Activated naive CD4-positive, alpha-beta T cell treated with anti-CD3 and anti-CD28 coated beads for 36 hours (primary cell): ENCODE measurements at regions of chr10 and their contacts with region 1.

Region 1: DNA sequence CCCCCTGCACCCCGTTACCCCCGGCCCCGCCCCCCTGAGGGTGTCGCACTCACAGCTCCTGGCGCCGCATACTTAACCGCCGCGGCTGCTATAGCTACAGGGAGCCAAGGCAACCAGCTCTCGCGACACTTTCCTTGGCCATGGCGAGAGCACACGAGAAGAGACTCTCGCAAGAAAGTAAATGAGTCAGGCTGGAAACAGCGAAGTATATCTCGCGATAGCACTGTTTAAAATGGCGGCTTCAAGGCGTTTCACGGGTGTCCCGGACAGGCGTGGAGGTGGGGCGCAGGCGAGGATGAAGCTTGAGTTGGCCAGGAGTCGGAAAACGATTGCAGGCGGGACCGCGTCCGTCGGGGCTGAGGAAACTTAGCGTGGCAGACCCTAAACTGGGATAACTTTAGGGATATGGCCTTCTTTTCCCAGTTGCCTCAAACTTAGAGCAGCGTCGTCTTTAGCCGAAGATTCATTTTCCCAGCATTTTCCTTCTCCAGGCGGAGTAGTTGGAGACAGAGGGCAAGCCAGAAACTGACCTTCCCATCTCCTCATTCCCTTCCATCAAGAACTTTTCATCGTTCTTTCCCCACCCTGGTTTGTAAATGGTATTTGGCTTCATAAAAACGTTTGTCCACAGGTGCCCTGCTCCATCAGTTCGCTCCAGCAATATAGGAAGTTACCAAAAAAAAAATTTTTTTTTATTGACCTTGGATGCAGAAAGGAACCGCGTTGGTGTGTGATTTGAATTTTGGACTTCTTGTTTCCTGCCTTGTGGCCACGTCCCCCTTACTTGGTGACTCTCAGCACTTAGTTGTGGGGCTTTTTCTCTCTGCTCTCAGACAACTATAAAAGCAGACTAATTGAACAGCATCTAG is 15.2 kb downstream of the MYOZ1 start:
- DNase-seq: peak; percentile 97
- H3K4me3 Mint-ChIP-seq: peak overlapping the region; percentile 99
- H3K27ac Mint-ChIP-seq: peak overlapping the region; percentile 95
- H3K4me1 Mint-ChIP-seq: peaks cover 17% of the 10 kb centered on the region
- H3K27me3 Mint-ChIP-seq: no peaks in the 10 kb centered on the region

Region 2: DNA sequence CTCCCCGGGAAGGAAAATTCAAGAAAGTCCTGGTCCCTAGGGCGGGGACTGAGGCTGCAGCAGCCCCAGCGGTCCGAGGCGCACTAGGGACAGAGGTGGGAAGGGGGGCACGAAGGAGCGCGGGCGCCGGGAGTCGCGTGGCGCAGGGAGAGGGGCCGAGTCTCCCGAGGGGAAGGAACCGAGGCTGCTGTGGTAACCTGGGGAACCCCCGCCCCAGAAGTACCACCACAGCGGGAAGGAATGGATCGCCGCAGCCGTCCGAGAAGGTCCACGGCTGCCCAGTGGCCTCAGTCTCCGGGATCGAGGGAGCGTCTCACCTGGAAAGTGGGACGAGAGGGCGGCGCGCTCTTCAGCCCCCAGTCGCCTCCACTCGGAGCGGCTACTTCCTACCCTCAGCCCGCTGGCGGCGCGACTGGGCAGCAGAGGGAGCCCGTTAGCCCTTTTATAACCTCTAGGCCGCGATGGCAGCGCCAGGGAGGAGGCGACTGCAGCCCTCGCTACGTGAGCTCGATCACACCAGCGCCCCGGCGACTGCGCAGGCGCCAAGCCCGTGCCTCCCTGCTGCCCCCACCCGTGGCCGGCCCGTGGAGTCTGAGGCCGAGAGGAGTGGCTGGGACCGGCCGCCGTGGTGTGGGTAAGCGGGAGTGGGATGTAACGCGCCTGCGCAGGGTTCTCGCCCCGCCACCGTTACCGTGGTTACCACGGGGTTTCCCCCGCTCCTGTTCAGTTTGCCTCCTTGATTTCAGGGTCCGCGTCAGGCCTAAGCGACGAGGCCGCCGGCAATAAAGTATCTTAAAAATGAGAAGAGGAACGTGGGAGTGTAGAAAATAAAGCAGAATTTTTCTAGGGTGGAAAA is 529.4 kb before region 1 on chr10 and contains the start of gene P4HA1:
- CTCF ChIA-PET with region 1: no interaction called
- intact Hi-C with region 1: loop called (anchors 1 kb)
- DNase-seq: peak; percentile 96
- H3K4me3 Mint-ChIP-seq: peak within 1 kb of the TSS; percentile 83
- H3K27ac Mint-ChIP-seq: peak within 1 kb of the TSS; percentile 93
- H3K4me1 Mint-ChIP-seq: peaks cover 32% of the 10 kb centered on the region
- H3K27me3 Mint-ChIP-seq: no peaks in the 10 kb centered on the region
- total RNA-seq, gene P4HA1: 15.3 to 15.9 TPM

Region 3: GRCh38 chr10:73246783-73247508 is 379.2 kb before region 1 on chr10 and contains the start of gene DNAJC9:
- CTCF ChIA-PET with region 1: no interaction called
- intact Hi-C with region 1: loop called (anchors 1 kb)
- DNase-seq: peak; percentile 98
- H3K4me3 Mint-ChIP-seq: peak within 1 kb of the TSS; percentile 100
- H3K27ac Mint-ChIP-seq: peak within 1 kb of the TSS; percentile 97
- H3K4me1 Mint-ChIP-seq: peaks cover 67% of the 10 kb centered on the region
- H3K27me3 Mint-ChIP-seq: no peaks in the 10 kb centered on the region
- total RNA-seq, gene DNAJC9: 55.2 to 57.2 TPM

Region 4: DNA sequence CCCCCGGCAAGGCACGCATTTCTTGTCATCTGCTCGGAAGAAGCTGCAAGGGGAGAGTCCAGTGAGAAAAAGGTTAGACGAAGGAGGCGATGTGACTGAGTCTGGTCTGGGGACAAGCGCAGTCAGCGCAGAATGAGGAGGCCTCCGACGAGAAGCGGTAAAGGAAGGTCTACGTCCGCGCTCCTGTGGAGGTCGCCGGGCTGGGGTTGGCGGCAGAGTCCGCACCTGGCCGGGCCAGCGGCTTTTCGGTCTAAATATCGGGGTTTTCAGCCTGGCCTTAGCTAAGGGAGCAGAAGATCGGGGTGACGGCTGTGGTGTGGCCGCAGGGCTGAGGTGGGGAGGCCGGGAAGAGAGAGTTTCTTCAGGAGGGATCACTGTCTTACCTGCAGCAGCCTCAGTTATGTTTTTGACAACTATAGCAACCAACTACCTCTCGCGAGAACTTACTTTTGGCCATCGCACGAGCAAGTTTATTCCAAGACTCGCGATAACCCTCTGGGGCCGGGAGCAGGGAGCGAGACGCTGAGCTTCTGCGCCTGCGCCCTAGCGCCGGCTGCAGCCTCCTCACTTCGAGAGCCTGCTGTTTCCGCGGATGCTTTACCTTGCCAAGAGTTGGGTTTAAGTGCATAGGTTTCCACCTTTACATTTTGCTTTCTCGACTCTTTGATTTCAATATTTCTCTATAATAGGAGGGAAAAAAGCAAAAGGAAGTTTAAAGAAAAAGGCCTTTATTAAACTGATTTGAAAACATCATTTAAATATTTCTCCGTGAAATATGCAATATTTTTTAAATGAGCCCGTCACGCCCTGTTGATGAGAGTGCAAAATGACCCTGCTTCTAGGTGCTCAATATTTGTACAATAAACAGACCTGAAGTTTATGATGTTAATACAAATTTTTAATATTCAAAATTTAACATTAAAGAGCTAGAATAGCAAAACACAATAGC is 267.5 kb before region 1 on chr10 and contains the start of gene CFAP70:
- CTCF ChIA-PET with region 1: no interaction called
- intact Hi-C with region 1: loop called (anchors 1 kb)
- DNase-seq: peak; percentile 96
- H3K4me3 Mint-ChIP-seq: peak within 1 kb of the TSS; percentile 96
- H3K27ac Mint-ChIP-seq: peak within 1 kb of the TSS; percentile 74
- H3K4me1 Mint-ChIP-seq: peaks cover 10% of the 10 kb centered on the region
- H3K27me3 Mint-ChIP-seq: no peaks in the 10 kb centered on the region
- total RNA-seq, gene CFAP70: 0.20 to 0.31 TPM

Region 5: GRCh38 chr10:73529089-73529832 is 96.9 kb before region 1 on chr10:
- CTCF ChIA-PET with region 1: interaction called, 7 read pairs
- intact Hi-C with region 1: loop called (anchors 5 kb)
- DNase-seq: peak; percentile 60
- H3K4me3 Mint-ChIP-seq: no peak overlapping the region
- H3K27ac Mint-ChIP-seq: no peak overlapping the region
- H3K4me1 Mint-ChIP-seq: no peaks in the 10 kb centered on the region
- H3K27me3 Mint-ChIP-seq: no peaks in the 10 kb centered on the region

Region 6: GRCh38 chr10:73644015-73644743 is 18.1 kb after region 1 on chr10:
- CTCF ChIA-PET with region 1: interaction called, 19 read pairs
- intact Hi-C with region 1: loop called (anchors 1 kb)
- DNase-seq: peak; percentile 63
- H3K4me3 Mint-ChIP-seq: no peak overlapping the region
- H3K27ac Mint-ChIP-seq: no peak overlapping the region
- H3K4me1 Mint-ChIP-seq: peaks cover 15% of the 10 kb centered on the region
- H3K27me3 Mint-ChIP-seq: peaks cover 8% of the 10 kb centered on the region

Region 7: DNA sequence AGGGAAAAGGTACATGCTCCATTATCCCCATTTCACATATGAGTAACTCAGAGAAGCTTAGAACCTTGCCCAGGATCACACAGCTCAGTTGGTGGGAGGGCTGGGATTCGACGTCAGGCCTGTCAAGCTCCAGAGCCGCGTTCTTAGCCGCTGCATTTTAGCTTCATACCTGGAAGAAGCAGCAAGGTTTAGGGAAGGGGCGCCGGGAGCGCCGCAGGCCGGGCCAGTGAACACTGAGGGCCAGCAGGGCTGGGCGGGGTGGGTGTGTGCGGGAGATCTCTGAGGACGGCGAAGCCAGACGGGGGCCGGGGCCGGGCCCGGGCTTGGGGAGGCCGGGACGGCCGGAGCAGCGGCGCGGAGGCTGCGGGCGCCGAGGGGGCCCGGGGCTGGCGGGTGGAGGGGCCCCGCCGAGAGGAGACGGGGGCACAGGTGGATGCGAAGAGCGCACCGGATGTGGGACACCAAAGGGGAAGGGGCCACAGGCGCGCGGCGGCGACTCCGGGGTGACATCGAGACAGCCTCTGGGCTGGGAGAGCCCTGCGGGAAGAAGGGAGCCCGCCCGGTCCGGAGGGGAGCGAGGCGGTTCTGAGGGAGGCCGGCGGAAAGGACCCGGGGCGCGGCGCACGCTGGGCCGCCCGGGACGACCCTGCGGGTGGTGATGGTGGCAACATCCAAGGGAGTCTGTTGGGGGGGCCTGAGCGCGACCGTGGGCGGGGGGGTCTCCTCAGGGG is 184.8 kb after region 1 on chr10:
- CTCF ChIA-PET with region 1: no interaction called
- intact Hi-C with region 1: loop called (anchors 1 kb)
- DNase-seq: peak; percentile 63
- H3K4me3 Mint-ChIP-seq: peak overlapping the region; percentile 93
- H3K27ac Mint-ChIP-seq: peak overlapping the region; percentile 99
- H3K4me1 Mint-ChIP-seq: peaks cover 47% of the 10 kb centered on the region
- H3K27me3 Mint-ChIP-seq: no peaks in the 10 kb centered on the region